ENCODE measurements at regions of chr18 and their contacts with region 1.

Region 1: DNA sequence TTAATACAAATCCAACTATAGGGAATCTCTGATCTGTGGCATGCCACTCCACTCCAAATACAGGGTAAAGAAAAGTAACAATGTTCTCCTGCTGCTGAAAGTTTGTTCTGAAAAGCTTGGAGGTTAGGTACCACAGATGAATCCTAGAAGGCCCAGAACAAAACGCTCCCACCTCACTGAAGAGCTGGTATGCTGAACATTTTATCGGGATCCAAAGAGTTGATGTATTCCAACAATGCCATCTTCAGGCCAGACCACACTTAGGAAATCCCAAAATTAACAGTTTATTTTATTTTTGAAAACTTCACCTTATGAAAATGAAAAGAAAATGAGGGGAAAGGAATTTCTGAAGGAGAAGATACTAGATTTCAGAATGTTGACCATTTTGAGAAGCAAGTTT is 145.1 kb upstream of the CDH19 start:
- DNase-seq: no peak
- H3K4me3 Mint-ChIP-seq: no peak overlapping the region
- H3K27ac Mint-ChIP-seq: no peak overlapping the region
- H3K4me1 Mint-ChIP-seq: no peaks in the 10 kb centered on the region
- H3K27me3 Mint-ChIP-seq: no peaks in the 10 kb centered on the region

Region 2: GRCh38 chr18:66682855-66683322 is 66.1 kb before region 1 on chr18:
- CTCF ChIA-PET with region 1: no interaction called
- POLR2A ChIA-PET with region 1: no interaction called
- intact Hi-C with region 1: loop called (anchors 10 kb)
- DNase-seq: no peak
- H3K4me3 Mint-ChIP-seq: no peak overlapping the region
- H3K27ac Mint-ChIP-seq: no peak overlapping the region
- H3K4me1 Mint-ChIP-seq: no peaks in the 10 kb centered on the region
- H3K27me3 Mint-ChIP-seq: no peaks in the 10 kb centered on the region

Measured in activated CD4-positive, alpha-beta memory T cell treated with anti-CD3 and anti-CD28 coated beads for 36 hours (primary cell).